Heart left ventricle (tissue), 16 donors: ENCODE measurements at regions of chr6 and their contacts with region 1.

Region 1: GRCh38 chr6:128648022-128648598 is 127.7 kb upstream of the PTPRK start:
- DNase-seq: no peak
- ATAC-seq: peak; percentile 93 to 97 (median 94)
- H3K4me3 ChIP-seq: peak overlapping the region in 8 of 12 donors; percentile 1 to 37 (median 22)
- H3K27ac ChIP-seq: peak overlapping the region in 10 of 12 donors; percentile 16 to 73 (median 62)
- H3K4me1 ChIP-seq: peaks cover 0 to 14% (median 0%) of the 10 kb centered on the region in 12 donors
- H3K27me3 ChIP-seq: no peaks in the 10 kb centered on the region
- CTCF ChIP-seq: no peak
- POLR2A ChIP-seq: no peak

Region 2: DNA sequence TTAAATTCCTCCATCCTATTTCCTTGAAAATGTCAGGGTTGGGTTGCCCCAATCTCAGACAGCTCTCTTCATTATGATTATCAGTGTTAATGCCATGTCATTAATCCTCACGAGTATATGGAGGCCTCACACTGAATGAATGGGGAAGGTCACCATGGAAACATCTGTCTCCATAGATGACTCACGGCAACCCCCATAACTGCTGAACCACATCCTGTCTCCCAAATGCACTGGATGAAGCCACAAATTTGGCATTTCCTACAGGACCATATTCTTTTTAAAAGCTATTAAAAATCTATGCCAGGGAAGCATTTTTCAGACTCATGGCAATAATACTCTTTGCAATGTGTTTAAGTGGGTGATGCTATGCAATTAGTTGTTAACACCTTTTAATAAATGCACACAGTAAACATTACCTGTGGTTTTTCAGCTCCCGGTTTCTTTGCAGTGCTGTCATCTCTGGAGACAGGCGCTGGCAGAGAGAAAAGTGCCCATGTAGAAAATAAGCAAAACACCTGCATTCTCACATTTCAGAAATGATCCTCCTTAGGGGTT is 47.6 kb before region 1 on chr6:
- intact Hi-C with region 1: loop called in 1 of 10 experiments (anchors 5 kb)
- DNase-seq: peak in 1 of 5 donors; percentile 10
- ATAC-seq: peak in 3 of 4 donors; percentile 44 to 66 (median 56)
- H3K4me3 ChIP-seq: no peak overlapping the region
- H3K27ac ChIP-seq: peak overlapping the region in 2 of 12 donors; percentile 12 to 17
- H3K4me1 ChIP-seq: peaks cover 0 to 32% (median 12%) of the 10 kb centered on the region in 12 donors
- H3K27me3 ChIP-seq: no peaks in the 10 kb centered on the region
- CTCF ChIP-seq: no peak
- POLR2A ChIP-seq: no peak